Activated B cell treated with CpG ODN at 0.5 μM for 24 hours (primary cell): ENCODE measurements at regions of chr5 and their contacts with region 1.

Region 1: GRCh38 chr5:135944967-135945560 is 9.7 kb downstream of the LECT2 start:
- DNase-seq: no peak
- ATAC-seq: no peak
- H3K4me3 Mint-ChIP-seq: no peak overlapping the region
- H3K27ac Mint-ChIP-seq: no peak overlapping the region
- H3K4me1 Mint-ChIP-seq: no peaks in the 10 kb centered on the region
- H3K27me3 Mint-ChIP-seq: peaks cover 12% of the 10 kb centered on the region
- CTCF ChIP-seq: no peak

Region 2: GRCh38 chr5:135289651-135290050 is 655.4 kb before region 1 on chr5:
- CTCF ChIA-PET with region 1: no interaction called
- POLR2A ChIA-PET with region 1: no interaction called
- intact Hi-C with region 1: no loop called
- DNase-seq: no peak
- ATAC-seq: no peak
- H3K4me3 Mint-ChIP-seq: no peak overlapping the region
- H3K27ac Mint-ChIP-seq: no peak overlapping the region
- H3K4me1 Mint-ChIP-seq: no peaks in the 10 kb centered on the region
- H3K27me3 Mint-ChIP-seq: peaks cover 40% of the 10 kb centered on the region
- CTCF ChIP-seq: no peak

Region 3: GRCh38 chr5:136062366-136063274 is 117.6 kb after region 1 on chr5:
- CTCF ChIA-PET with region 1: no interaction called
- POLR2A ChIA-PET with region 1: no interaction called
- intact Hi-C with region 1: loop called (anchors 5 kb)
- DNase-seq: no peak
- ATAC-seq: peak; percentile 25
- H3K4me3 Mint-ChIP-seq: no peak overlapping the region
- H3K27ac Mint-ChIP-seq: no peak overlapping the region
- H3K4me1 Mint-ChIP-seq: no peaks in the 10 kb centered on the region
- H3K27me3 Mint-ChIP-seq: peaks cover 3% of the 10 kb centered on the region
- CTCF ChIP-seq: no peak

Region 4: GRCh38 chr5:136080483-136081216 is 135.6 kb after region 1 on chr5:
- CTCF ChIA-PET with region 1: no interaction called
- POLR2A ChIA-PET with region 1: no interaction called
- intact Hi-C with region 1: loop called (anchors 1 kb)
- DNase-seq: peak; percentile 50
- ATAC-seq: peak; percentile 94
- H3K4me3 Mint-ChIP-seq: peak overlapping the region; percentile 77
- H3K27ac Mint-ChIP-seq: peak overlapping the region; percentile 47
- H3K4me1 Mint-ChIP-seq: peaks cover 15% of the 10 kb centered on the region
- H3K27me3 Mint-ChIP-seq: peaks cover 31% of the 10 kb centered on the region
- CTCF ChIP-seq: no peak

Region 5: GRCh38 chr5:136174021-136174659 is 229.1 kb after region 1 on chr5:
- CTCF ChIA-PET with region 1: interaction called, 11 read pairs
- POLR2A ChIA-PET with region 1: no interaction called
- intact Hi-C with region 1: loop called (anchors 1 kb)
- DNase-seq: no peak
- ATAC-seq: no peak
- H3K4me3 Mint-ChIP-seq: no peak overlapping the region
- H3K27ac Mint-ChIP-seq: no peak overlapping the region
- H3K4me1 Mint-ChIP-seq: no peaks in the 10 kb centered on the region
- H3K27me3 Mint-ChIP-seq: no peaks in the 10 kb centered on the region
- CTCF ChIP-seq: no peak

Region 6: GRCh38 chr5:136212252-136212721 is 267.2 kb after region 1 on chr5:
- CTCF ChIA-PET with region 1: interaction called, 3 read pairs
- POLR2A ChIA-PET with region 1: no interaction called
- intact Hi-C with region 1: loop called (anchors 1 kb)
- DNase-seq: peak; percentile 37
- ATAC-seq: peak; percentile 28
- H3K4me3 Mint-ChIP-seq: no peak overlapping the region
- H3K27ac Mint-ChIP-seq: no peak overlapping the region
- H3K4me1 Mint-ChIP-seq: no peaks in the 10 kb centered on the region
- H3K27me3 Mint-ChIP-seq: peaks cover 20% of the 10 kb centered on the region
- CTCF ChIP-seq: peak; percentile 46